Heart left ventricle (tissue), 16 donors: ENCODE measurements at regions of chr4 and their contacts with region 1.

Region 1: DNA sequence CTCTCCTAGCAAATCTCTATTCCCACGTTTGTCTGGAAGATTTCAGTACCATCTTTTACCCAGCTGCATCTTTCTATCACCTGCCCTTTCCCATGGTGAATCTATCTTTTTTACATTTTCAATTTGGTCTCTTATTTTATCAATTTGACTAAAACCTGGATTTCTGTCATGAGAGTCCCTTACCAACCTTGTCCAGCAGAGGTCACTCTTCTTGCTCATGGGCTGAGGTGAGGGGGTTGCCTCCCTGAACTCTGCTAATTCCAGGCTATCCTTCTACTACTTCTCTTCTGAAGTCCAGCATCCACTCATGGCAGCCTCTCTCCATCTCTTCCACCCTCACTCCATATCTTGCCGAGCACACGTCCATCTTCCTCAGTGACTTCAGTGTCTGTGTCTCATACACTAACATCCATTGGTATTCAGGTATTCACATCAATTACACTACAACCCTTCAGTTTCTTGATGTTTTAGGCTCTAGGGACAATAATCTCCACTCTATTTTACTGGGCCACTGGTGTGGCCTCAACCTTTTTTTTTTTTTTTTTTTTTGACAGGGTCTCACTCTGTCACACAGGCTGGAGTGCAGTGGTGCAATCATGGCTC is 17.8 kb upstream of the ZNF827 start:
- DNase-seq: peak in 2 of 5 donors; percentile 11 to 22
- ATAC-seq: peak in 1 of 4 donors; percentile 42
- H3K4me3 ChIP-seq: no peak overlapping the region
- H3K27ac ChIP-seq: no peak overlapping the region
- H3K4me1 ChIP-seq: no peaks in the 10 kb centered on the region
- H3K27me3 ChIP-seq: no peaks in the 10 kb centered on the region
- CTCF ChIP-seq: peak; percentile 60 to 80 (median 74)
- POLR2A ChIP-seq: no peak

Region 2: GRCh38 chr4:146175541-146176453 is 219.4 kb after region 1 on chr4 and contains the start of gene LSM6:
- intact Hi-C with region 1: loop called in 1 of 10 experiments (anchors 5 kb)
- DNase-seq: peak; percentile 91 to 93 (median 92)
- ATAC-seq: peak; percentile 95 to 99 (median 98)
- H3K4me3 ChIP-seq: peak within 1 kb of the TSS; percentile 64 to 95 (median 88)
- H3K27ac ChIP-seq: peak within 1 kb of the TSS; percentile 77 to 95 (median 93)
- H3K4me1 ChIP-seq: peaks cover 0 to 47% (median 39%) of the 10 kb centered on the region in 12 donors
- H3K27me3 ChIP-seq: no peaks in the 10 kb centered on the region
- CTCF ChIP-seq: peak in 6 of 12 donors; percentile 13 to 37 (median 28)
- POLR2A ChIP-seq: peak in 1 of 2 donors; percentile 74
- total RNA-seq, gene LSM6: 9.9 to 18.5 (median 12.1) TPM

Region 3: DNA sequence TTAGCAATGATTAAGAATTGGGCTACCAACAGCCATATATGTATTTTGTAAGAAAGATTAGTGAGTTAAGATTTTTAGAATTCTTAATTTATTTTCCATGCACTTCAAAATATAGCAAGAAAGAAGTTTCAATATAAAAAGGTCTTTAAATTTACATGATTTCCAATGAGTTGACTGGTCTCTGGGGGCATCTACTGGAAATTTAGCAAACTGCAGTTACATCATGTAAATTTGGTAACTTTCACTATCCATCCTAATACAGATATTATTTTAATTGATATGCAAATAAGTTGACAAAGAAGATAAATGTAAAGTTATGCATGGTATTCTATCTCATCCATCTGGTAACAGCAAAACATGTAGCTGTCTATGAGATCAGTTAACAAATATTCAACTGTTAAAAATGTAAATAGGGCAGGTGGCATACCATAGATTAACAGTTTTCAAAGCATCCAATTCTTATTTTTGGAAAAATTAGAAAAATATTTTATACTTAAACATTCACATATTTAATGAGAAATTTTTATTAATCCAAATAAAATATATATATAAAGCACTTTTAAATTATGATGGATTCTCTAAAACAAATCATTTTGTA is 960.2 kb after region 1 on chr4:
- intact Hi-C with region 1: loop called in 4 of 10 experiments (anchors 5 to 10 kb)
- DNase-seq: no peak
- ATAC-seq: no peak
- H3K4me3 ChIP-seq: no peak overlapping the region
- H3K27ac ChIP-seq: no peak overlapping the region
- H3K4me1 ChIP-seq: no peaks in the 10 kb centered on the region
- H3K27me3 ChIP-seq: peaks cover 0 to 47% (median 5%) of the 10 kb centered on the region in 9 donors
- CTCF ChIP-seq: peak; percentile 43 to 85 (median 70)
- POLR2A ChIP-seq: no peak

Region 4: DNA sequence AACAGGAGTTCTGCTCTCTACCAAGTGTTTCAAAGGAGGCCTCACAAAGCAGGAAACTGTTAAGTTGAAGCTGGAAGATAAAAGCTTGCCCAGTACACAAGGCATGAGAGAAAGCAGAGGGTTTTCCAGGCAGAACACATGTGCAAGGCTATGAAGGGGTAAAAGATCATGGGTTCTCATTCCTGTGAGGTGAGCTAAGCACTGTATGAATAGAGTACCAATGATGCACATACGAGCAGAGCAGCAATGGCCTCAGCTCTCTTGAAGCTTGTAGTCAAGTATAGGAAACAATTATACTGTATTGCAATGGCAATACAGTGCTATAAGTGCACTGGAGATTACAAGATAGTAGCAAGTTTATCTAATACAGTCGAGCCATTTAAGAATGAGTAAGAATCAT is 971.3 kb after region 1 on chr4:
- intact Hi-C with region 1: loop called in 1 of 10 experiments (anchors 10 kb)
- DNase-seq: no peak
- ATAC-seq: peak in 3 of 4 donors; percentile 29 to 62 (median 47)
- H3K4me3 ChIP-seq: no peak overlapping the region
- H3K27ac ChIP-seq: no peak overlapping the region
- H3K4me1 ChIP-seq: peaks cover 0 to 3% (median 0%) of the 10 kb centered on the region in 12 donors
- H3K27me3 ChIP-seq: peaks cover 0 to 7% (median 0%) of the 10 kb centered on the region in 9 donors
- CTCF ChIP-seq: no peak
- POLR2A ChIP-seq: no peak

Region 5: GRCh38 chr4:147096667-147097604 is 1140.5 kb after region 1 on chr4:
- intact Hi-C with region 1: loop called in 2 of 10 experiments (anchors 10 kb)
- DNase-seq: no peak
- ATAC-seq: peak in 1 of 4 donors; percentile 49
- H3K4me3 ChIP-seq: no peak overlapping the region
- H3K27ac ChIP-seq: no peak overlapping the region
- H3K4me1 ChIP-seq: no peaks in the 10 kb centered on the region
- H3K27me3 ChIP-seq: no peaks in the 10 kb centered on the region
- CTCF ChIP-seq: peak; percentile 49 to 79 (median 68)
- POLR2A ChIP-seq: no peak